ENCODE measurements at regions of chr16 and their contacts with region 1.

Region 1: DNA sequence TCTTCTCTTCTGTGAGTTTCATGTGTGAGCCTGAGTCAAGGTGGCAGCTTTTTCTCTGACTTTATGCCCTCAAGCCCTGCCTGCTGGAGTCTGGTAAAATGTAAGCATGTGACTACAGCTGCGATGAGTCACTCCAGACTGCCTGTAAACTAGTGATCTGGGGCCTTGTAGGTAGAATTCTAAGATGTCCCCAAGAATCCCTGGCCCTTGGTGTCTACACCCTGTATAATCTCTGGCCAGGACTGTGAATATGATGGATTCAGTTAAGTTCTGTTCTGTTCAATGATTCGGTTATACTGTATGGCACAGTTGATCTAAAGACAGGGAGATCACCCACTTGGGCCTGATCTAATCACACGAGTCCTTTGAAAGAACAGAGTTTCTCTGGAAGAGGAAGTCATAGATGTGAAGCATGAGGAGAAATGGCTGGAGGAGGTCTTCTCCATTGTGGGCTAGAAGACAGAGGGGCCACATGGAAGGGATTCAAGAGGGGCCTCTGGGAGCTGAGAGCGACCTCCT is 29.8 kb downstream of the PRSS54 start:
- DNase-seq: peak; percentile 52 to 79 (median 62)
- ATAC-seq: peak; percentile 78
- H3K4me3 ChIP-seq: no peak overlapping the region
- H3K27ac ChIP-seq: peak overlapping the region; percentile 89
- H3K4me1 ChIP-seq: peaks cover 22 to 55% of the 10 kb centered on the region in 2 experiments
- H3K27me3 ChIP-seq: no peaks in the 10 kb centered on the region
- CTCF ChIP-seq: no peak
- EP300 ChIP-seq: no peak
- POLR2A ChIP-seq: no peak
- RAD21 ChIP-seq: no peak

Region 2: DNA sequence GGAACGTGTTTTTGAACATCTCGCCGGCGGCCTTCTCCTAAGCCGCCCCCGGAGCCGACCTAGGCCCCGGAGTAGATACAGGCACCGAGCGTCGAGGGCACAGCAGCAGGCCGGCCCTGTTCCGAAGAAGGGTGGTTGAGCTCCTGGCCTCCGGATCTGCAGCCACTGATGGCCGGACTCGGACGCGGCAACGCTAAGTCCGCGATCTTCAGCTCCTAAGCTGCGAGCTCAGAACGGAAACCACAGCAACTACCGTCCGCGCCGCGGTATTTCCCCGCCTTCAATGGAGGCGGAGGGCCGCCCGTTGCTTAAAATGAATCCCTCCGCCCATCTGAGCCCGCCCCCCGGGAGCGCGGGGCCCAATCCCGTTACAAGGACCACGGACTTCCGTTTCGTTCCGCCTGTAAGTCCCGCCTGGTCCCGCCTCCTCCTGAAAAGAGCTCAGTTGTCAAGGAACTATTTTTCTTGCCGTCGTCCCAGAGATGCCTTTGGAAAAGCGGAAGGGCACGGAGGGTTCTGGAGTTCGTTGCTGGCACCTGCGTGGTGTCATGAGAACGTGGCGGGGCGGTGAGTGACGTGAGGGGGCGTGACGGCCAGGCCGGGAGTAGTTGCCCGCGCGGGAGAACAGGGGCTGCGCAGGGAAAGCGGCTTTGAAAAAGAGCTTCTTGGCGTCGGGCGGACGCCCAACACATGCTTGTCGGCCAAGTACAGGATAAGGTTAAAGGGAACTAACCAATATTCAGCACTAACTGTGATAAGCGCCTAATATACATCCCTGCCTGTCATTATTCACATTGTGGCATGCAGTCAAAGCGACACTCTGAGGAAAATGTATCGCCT is 135.7 kb before region 1 on chr16 and contains the start of gene CFAP20:
- CTCF ChIA-PET with region 1: no interaction called
- POLR2A ChIA-PET with region 1: interaction called, 4 read pairs
- in situ Hi-C with region 1: no loop called
- intact Hi-C with region 1: loop called (anchors 10 kb)
- DNase-seq: peak; percentile 96 to 100 (median 96)
- ATAC-seq: peak; percentile 90
- H3K4me3 ChIP-seq: peak within 1 kb of the TSS; percentile 93
- H3K27ac ChIP-seq: peak within 1 kb of the TSS; percentile 91
- H3K4me1 ChIP-seq: peaks cover 17 to 24% of the 10 kb centered on the region in 2 experiments; a peak in 4 of 5 replicates
- H3K27me3 ChIP-seq: no peaks in the 10 kb centered on the region
- CTCF ChIP-seq: no peak
- EP300 ChIP-seq: peak; percentile 79
- POLR2A ChIP-seq: peak; percentile 86
- RAD21 ChIP-seq: no peak
- polyA plus RNA-seq, gene CFAP20: 20.5 to 30.4 TPM

Region 3: GRCh38 chr16:58198022-58198683 is 66.9 kb before region 1 on chr16 and contains the start of gene CSNK2A2:
- CTCF ChIA-PET with region 1: no interaction called
- POLR2A ChIA-PET with region 1: no interaction called
- in situ Hi-C with region 1: no loop called
- intact Hi-C with region 1: loop called (anchors 10 kb)
- DNase-seq: peak; percentile 86 to 96 (median 96)
- ATAC-seq: peak; percentile 97
- H3K4me3 ChIP-seq: peak within 1 kb of the TSS; percentile 64
- H3K27ac ChIP-seq: peak within 1 kb of the TSS; percentile 66
- H3K4me1 ChIP-seq: peaks cover 13 to 17% of the 10 kb centered on the region in 2 experiments; a peak in 4 of 5 replicates
- H3K27me3 ChIP-seq: no peaks in the 10 kb centered on the region; a peak in 1 of 5 replicates
- CTCF ChIP-seq: peak in 2 of 3 experiments; percentile 58 to 61; a peak in 3 of 6 replicates
- EP300 ChIP-seq: no peak
- POLR2A ChIP-seq: peak; percentile 62
- RAD21 ChIP-seq: no peak
- polyA plus RNA-seq, gene CSNK2A2: 23.4 to 25.2 TPM

Region 4: DNA sequence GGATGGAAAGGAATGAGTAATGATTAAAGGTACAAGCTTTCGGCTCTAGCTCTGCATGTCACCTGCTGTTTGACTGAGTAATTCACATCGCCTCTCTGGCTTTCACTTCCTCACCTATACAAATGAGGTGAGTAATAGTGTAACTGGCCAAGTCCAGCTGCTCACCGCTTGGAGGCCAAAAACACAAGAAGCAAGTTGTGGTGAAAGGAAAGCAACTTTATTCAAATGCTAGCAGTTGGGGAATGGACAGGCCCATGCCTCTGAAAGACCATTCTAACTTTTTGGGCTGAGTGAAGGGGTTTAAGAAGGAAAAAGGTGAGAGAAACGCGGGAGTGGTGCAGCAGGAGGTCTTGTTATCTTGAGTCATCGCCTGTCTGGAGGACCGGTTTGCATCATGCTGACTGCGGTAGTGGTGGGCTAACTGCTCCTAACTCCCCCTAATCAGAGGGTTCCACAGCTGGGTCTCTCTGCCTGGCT is 21.5 kb before region 1 on chr16:
- CTCF ChIA-PET with region 1: no interaction called
- POLR2A ChIA-PET with region 1: interaction called, 4 read pairs
- in situ Hi-C with region 1: no loop called
- intact Hi-C with region 1: loop called (anchors 2 kb)
- DNase-seq: peak in 2 of 4 experiments; percentile 50 to 70
- ATAC-seq: peak; percentile 89
- H3K4me3 ChIP-seq: no peak overlapping the region
- H3K27ac ChIP-seq: peak overlapping the region; percentile 41; the same call in 2 of the 3 replicates
- H3K4me1 ChIP-seq: peaks cover 6 to 22% of the 10 kb centered on the region in 2 experiments
- H3K27me3 ChIP-seq: no peaks in the 10 kb centered on the region
- CTCF ChIP-seq: peak in 2 of 3 experiments; percentile 10 to 26; a peak in 2 of 6 replicates
- EP300 ChIP-seq: peak; percentile 34; the same call in 1 of the 2 replicates
- POLR2A ChIP-seq: no peak
- RAD21 ChIP-seq: no peak

Region 5: GRCh38 chr16:58249780-58250478 is 15.1 kb before region 1 on chr16:
- CTCF ChIA-PET with region 1: no interaction called
- POLR2A ChIA-PET with region 1: interaction called, 12 read pairs
- in situ Hi-C with region 1: no loop called
- intact Hi-C with region 1: no loop called
- DNase-seq: peak; percentile 86 to 95 (median 92)
- ATAC-seq: peak; percentile 96
- H3K4me3 ChIP-seq: peak overlapping the region; percentile 69
- H3K27ac ChIP-seq: 0 out of 3 replicates have a peak overlapping the region, but pooled peaks have one; percentile 6
- H3K4me1 ChIP-seq: peaks cover 6 to 7% of the 10 kb centered on the region in 2 experiments; a peak in 3 of 5 replicates
- H3K27me3 ChIP-seq: no peaks in the 10 kb centered on the region
- CTCF ChIP-seq: 0 out of 6 replicates have a peak, but pooled peaks of 1 of the 3 experiments have one; percentile 4
- EP300 ChIP-seq: no peak
- POLR2A ChIP-seq: peak; percentile 72
- RAD21 ChIP-seq: no peak

Measured in K562 (cell line).